Gastrocnemius medialis (tissue), 4 donors: ENCODE measurements at regions of chr6 and their contacts with region 1.

Region 1: DNA sequence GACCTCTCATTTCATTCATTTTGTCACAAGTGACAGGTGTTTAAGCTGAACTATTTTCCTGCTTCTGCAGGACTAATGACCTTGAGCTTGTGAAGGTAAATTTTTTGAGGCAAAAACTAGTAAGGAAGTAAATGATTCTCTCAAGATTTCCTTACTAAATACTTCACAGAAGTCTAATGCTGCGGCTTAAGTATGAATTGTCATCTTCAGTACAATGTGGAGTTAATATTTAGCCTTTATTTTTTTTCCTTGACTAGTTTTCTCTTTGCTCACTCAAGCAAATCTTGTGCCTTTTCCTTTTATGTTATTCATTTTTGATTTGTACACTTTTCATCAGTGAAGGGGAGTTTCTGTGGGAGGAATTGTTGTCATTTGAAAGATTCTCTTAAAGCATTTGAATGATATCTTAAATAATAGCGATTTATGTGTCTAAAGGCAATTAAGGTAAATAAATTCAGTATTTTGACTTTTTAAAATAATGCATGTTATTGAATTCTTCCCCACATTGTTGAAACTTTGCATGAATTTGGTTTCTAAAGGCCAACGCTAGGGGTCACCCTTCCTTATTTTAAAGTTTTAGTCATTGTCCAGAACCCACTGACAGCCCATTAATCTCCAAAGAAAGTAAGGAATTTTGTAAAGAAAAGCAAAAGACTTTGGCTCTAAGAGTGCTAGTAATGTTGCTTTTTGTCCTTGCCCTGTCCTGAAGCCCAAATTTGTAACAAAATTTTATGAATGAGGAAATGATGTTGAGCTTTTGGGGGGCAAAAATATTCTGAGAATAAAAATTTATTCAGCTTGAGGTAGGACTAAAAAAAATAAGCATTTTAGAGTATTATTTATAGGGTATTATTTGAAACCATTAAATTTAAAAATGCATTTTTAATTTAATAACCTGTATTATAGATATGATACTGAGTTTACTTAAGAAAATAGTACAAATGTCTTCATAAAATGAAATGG is 157.4 kb upstream of the LAMA2 start:
- DNase-seq: no peak
- ATAC-seq: no peak
- H3K4me3 ChIP-seq: no peak overlapping the region
- H3K27ac ChIP-seq: no peak overlapping the region
- H3K4me1 ChIP-seq: no peaks in the 10 kb centered on the region
- H3K27me3 ChIP-seq: no peaks in the 10 kb centered on the region
- CTCF ChIP-seq: peak; percentile 20 to 56 (median 35)
- POLR2A ChIP-seq: no peak

Region 2: DNA sequence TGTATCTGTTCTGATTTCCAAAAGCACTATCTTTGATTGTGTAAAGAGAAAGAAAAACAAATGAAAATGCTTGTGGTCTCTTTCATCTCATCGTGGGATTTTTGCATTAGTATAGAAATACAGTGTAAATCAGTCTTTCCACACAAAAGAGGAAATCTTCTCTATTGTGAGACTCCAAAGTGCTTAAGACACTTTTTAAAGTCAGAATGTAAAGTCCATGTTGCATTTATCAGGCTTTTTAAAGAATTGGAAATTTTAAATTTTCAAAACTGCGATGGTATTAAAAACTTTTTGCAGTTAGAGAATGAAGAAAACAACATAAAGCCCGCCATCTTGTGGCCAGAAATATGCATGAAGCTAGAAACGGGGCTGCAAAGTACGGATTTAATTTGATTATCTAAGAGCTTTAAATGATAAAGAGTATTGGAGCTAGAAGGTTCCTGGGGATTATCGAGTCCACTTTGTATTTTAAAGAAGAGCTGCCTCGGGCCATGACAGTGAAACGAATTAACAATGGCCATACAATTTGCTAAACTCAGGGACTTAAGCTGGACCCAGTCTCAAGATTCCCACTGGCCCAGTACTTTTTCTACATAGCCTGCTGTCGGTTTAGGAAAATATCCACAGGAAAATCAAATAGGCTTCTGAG is 644.8 kb after region 1 on chr6:
- in situ Hi-C with region 1: no loop called
- intact Hi-C with region 1: loop called (anchors 5 kb)
- DNase-seq: no peak
- ATAC-seq: peak in 1 of 2 donors; percentile 44
- H3K4me3 ChIP-seq: peak overlapping the region in 1 of 4 donors; percentile 12
- H3K27ac ChIP-seq: no peak overlapping the region
- H3K4me1 ChIP-seq: peaks cover 0 to 4% of the 10 kb centered on the region in 2 donors
- H3K27me3 ChIP-seq: no peaks in the 10 kb centered on the region
- CTCF ChIP-seq: peak in 4 of 5 experiments; percentile 28 to 63 (median 52)
- POLR2A ChIP-seq: no peak